Activated T-helper 1 cell treated with anti-CD3 and anti-CD28 coated beads, Interleukin-12 subunit alpha, Interleukin-12 subunit beta, Interleukin-2, Interleukin-4 antibody, amounts not matched to agents 30 ng/mL and 10 ng/mL and 1 ng/mL, durations not matched to agents 14 hours and 24 hours and 36 hours (primary cell): ENCODE measurements at regions of chr11 and their contacts with region 1.

Region 1: DNA sequence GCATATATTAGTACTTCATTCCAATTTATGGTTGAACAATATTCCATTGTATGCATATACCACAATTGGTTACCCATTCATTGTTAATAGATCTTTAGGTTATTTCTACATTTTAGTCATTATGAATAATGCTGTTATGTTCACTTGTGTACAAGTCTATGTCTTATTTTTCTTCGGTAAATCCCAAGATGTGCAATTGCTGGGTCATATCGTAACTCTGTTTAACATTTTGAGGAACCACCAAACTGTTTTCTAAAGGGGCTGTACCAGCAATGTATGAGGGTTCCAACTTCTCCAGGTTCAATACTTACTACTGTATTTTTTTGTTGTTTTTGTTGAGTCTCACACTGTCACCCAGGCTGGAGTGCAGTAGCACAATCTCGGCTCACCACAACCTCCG is 33.1 kb downstream of the NUP98 start:
- DNase-seq: no peak
- H3K4me3 Mint-ChIP-seq: no peak overlapping the region
- H3K27ac Mint-ChIP-seq: no peak overlapping the region
- H3K4me1 Mint-ChIP-seq: no peaks in the 10 kb centered on the region
- H3K27me3 Mint-ChIP-seq: no peaks in the 10 kb centered on the region

Region 2: GRCh38 chr11:3609416-3610265 is 154.6 kb before region 1 on chr11:
- intact Hi-C with region 1: no loop called
- DNase-seq: no peak
- H3K4me3 Mint-ChIP-seq: no peak overlapping the region
- H3K27ac Mint-ChIP-seq: no peak overlapping the region
- H3K4me1 Mint-ChIP-seq: peaks cover 9% of the 10 kb centered on the region
- H3K27me3 Mint-ChIP-seq: no peaks in the 10 kb centered on the region

Region 3: DNA sequence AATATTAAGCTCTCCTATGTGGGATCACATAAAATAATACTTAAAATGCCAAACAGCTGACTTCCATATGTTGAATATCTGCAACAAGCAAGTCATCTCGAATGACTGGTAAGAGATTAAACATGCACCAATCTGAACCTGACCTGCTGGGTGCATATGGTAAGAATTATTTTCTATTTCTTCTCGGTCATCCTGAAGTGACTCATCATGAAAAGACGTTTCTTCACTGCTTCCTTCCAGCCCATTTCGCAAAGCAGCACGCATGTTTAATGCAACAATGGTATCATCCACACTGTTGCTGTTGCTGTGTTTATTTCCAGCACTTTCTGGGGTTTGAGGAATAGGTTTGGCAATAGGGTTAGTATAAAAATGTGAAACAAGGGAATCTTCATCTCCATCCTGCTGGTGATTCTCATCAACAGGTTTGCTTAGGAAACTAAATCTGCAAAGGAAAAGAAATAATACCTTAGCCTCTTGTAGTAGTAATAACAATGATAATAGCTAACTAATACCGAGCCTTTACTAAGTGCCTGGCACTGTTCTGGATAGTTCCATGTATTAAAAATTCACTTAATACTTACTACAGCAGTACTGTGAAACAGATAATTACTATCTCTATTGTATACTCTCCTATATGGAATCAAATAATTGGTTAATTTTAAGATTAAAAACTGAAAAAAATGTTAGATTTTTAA is 41.1 kb before region 1 on chr11:
- intact Hi-C with region 1: loop called (anchors 5 kb)
- DNase-seq: no peak
- H3K4me3 Mint-ChIP-seq: no peak overlapping the region
- H3K27ac Mint-ChIP-seq: no peak overlapping the region
- H3K4me1 Mint-ChIP-seq: peaks cover 6% of the 10 kb centered on the region
- H3K27me3 Mint-ChIP-seq: no peaks in the 10 kb centered on the region

Region 4: GRCh38 chr11:3816668-3817067 is 52.4 kb after region 1 on chr11:
- intact Hi-C with region 1: no loop called
- DNase-seq: no peak
- H3K4me3 Mint-ChIP-seq: no peak overlapping the region
- H3K27ac Mint-ChIP-seq: no peak overlapping the region
- H3K4me1 Mint-ChIP-seq: no peaks in the 10 kb centered on the region
- H3K27me3 Mint-ChIP-seq: no peaks in the 10 kb centered on the region